Mammary epithelial cell (primary cell): ENCODE measurements at regions of chr2 and their contacts with region 1.

Region 1: DNA sequence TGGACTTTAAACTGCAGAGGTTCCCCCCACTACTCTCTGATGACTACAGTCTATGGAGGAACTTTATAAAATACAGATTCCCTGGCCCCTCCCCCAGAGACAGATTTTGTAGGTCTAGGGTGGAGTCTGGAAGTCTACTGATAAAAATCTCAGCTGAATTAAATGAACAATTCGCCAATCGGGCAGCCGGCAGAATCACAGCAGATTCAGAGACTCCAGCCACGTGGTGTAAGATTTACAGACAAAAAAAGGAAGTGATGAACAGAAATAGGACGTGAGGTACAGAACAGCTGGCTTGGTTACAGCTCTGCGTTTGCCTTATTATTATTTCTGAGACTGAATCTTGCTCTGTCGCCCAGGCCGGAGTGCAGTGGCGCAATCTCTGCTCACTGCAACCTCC is 21.4 kb upstream of the MTA3 start:
- DNase-seq: no peak
- H3K4me3 ChIP-seq: no peak overlapping the region
- H3K27ac ChIP-seq: no peak overlapping the region
- H3K4me1 ChIP-seq: no peaks in the 10 kb centered on the region
- H3K27me3 ChIP-seq: no peaks in the 10 kb centered on the region
- CTCF ChIP-seq: no peak

Region 2: DNA sequence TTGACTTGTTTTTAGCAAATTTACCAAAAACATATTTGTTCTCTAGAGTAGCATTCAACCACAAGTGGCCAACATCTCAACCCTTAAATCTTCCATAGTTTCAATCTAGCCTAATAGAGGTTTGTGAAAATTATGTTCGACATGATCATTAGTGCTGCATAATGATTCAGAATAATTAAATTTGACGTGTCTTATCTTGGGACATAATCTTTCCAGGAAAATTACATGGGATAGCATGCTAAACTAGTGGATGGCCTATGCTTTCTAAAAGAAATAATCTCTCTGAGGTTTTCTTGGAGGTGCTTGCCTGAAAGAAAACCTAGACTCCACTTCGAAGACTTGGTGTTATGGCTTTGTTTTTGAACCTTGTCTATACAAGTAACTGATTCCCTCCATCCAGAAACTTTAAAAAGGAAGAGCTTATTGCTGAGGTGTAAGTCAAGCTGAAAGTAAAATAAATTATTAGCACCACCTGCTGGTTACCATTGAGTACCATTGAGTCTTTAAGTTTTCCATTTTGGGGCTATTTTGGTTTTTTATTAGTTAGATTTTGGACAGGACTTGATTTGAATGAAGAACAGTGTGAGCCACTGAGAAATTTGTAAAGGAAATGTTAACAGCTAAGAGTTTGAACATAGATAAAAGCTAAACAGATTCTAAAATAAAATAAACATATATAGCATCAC is 218.7 kb before region 1 on chr2:
- CTCF ChIA-PET with region 1: no interaction called
- dilution Hi-C with region 1: no loop called
- in situ Hi-C with region 1: no loop called
- intact Hi-C with region 1: no loop called
- DNase-seq: peak; percentile 6
- H3K4me3 ChIP-seq: no peak overlapping the region
- H3K27ac ChIP-seq: no peak overlapping the region
- H3K4me1 ChIP-seq: no peaks in the 10 kb centered on the region
- H3K27me3 ChIP-seq: no peaks in the 10 kb centered on the region
- CTCF ChIP-seq: peak; percentile 42 to 49

Region 3: GRCh38 chr2:42443718-42444399 is 103.2 kb before region 1 on chr2:
- CTCF ChIA-PET with region 1: no interaction called
- dilution Hi-C with region 1: loop called (anchors 5 kb)
- in situ Hi-C with region 1: no loop called
- intact Hi-C with region 1: no loop called
- DNase-seq: no peak
- H3K4me3 ChIP-seq: no peak overlapping the region
- H3K27ac ChIP-seq: no peak overlapping the region
- H3K4me1 ChIP-seq: no peaks in the 10 kb centered on the region
- H3K27me3 ChIP-seq: no peaks in the 10 kb centered on the region
- CTCF ChIP-seq: no peak

Region 4: DNA sequence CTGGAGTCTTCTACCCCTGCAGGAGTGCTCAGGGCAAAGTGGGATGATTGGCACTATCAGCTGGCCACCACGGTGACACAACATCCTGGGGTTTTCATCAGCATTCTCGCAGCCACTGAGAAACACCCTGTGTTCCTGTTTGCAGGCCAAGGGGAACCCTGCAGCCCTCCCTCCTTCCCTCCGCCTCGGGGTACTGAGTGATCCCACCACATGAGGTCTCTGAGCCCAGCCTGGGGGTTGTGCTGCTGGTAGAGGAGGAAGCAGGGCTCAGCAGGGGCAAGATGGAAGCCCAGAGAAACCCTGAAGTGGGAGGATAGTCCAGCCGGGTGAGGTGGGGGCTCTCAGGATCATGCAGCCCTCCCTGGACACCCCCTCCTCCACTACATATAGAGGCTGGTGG is 217.1 kb after region 1 on chr2 and contains the start of gene OXER1:
- CTCF ChIA-PET with region 1: no interaction called
- dilution Hi-C with region 1: no loop called
- in situ Hi-C with region 1: no loop called
- intact Hi-C with region 1: no loop called
- DNase-seq: no peak
- H3K4me3 ChIP-seq: no peak within 1 kb of the TSS
- H3K27ac ChIP-seq: no peak within 1 kb of the TSS
- H3K4me1 ChIP-seq: no peaks in the 10 kb centered on the region
- H3K27me3 ChIP-seq: no peaks in the 10 kb centered on the region
- CTCF ChIP-seq: no peak
- total RNA-seq, gene OXER1: 0.17 TPM in 1 of 2 donors, not detected in the other